Activated CD4-positive, alpha-beta memory T cell treated with anti-CD3 and anti-CD28 coated beads for 36 hours (primary cell): ENCODE measurements at regions of chr1 and their contacts with region 1.

Region 1: DNA sequence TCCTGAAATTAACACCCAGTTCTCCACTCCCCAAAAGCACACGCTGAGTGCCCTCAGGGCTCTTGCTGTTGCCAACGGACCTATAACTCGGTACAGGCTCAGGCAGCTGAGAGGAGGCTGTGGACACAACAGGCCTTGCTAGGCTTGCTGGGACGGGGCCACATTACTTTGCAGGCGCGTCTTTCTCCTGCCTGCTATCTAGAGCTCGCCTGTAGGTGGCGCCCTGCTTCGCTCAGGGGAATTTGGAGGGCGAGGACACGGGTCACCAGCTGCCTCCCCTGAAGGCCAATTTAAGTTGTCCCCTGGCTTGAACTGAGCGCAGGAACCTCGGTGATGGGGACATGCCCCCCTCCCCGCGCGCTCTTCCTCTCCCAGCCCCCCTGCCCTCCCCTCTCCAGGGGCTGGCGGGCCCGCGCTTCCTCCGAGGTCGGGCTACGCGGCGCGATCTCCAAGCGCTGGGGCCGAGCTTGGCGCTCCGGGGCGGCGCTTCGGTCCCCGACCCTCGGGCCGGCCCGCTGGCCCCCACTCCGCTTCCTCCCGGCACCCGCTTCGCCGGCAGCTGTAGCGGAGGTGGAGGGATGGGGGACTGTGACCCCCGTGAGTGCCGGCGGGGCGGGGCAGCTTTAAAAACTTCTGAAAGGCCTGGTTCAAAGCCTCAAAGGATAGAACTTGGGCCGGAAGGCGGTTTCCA is 32.4 kb upstream of the NFIA start:
- DNase-seq: peak; percentile 94
- H3K4me3 Mint-ChIP-seq: peak overlapping the region; percentile 71
- H3K27ac Mint-ChIP-seq: no peak overlapping the region
- H3K4me1 Mint-ChIP-seq: peaks cover 24% of the 10 kb centered on the region
- H3K27me3 Mint-ChIP-seq: peaks cover 37% of the 10 kb centered on the region

Region 2: DNA sequence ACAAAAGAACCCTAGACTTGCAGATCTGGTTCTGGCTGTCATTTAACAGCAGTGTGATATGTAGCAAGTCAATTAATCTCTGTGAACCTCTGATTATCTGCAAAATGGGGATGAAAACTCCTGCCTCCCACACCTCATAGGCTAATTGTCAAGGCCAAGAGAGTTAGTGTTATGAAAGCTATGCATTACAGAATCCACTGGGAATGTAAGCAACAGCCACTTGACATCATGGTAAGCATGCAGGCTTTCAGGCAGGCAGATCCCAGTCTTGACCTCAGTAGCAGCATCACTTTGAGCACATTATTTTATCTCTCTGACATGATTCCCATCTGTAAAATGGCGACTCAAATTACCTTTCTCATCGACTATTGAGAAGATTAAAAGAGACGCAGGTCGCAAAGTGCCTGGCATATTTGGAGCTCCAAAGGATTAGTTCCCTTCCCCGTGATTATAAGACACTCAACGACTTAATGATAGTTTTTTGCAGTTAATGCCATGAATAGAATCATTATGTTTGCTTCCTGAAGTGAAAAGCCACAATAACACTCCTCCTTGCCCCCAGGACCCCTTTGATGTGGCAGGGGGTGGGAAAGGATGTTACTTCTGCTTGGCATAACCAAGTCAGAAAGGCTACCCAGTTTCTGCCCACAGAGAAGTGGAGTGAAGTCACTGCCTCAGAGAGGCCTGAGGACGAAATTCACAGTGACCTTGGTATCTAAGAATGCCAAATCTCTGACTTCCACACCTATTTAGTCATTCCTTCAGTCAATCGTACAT is 240.6 kb before region 1 on chr1:
- CTCF ChIA-PET with region 1: no interaction called
- POLR2A ChIA-PET with region 1: no interaction called
- intact Hi-C with region 1: no loop called
- DNase-seq: no peak
- H3K4me3 Mint-ChIP-seq: no peak overlapping the region
- H3K27ac Mint-ChIP-seq: no peak overlapping the region
- H3K4me1 Mint-ChIP-seq: no peaks in the 10 kb centered on the region
- H3K27me3 Mint-ChIP-seq: no peaks in the 10 kb centered on the region

Region 3: DNA sequence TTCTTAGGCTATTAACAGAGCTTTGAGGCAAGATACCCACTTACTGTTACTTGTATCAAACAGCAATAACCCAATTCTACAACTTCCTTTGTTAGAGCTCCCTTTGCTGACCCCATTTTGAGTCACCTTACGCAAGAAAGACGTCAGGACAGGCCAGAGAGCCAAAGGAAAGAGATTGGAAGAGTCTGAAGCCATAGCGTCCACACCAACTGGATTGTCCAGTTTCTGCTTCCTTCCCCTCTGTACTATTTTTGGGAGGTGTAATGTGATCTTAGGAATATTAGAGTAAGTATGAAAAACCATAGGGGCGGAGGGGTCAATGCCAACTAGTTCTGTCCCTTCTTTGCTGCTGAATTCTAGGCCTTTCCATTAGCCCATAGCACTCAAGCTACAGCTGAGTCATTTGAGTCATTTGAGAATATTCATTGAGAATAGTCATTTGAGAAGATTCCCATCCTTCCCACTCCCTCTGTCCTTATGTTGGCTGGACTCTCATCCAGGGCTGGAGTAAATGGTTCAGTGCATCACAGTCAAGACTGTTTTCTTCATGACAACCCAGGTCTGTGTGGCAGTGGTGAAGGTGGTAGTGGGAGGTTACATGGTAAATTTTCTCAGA is 17.5 kb after region 1 on chr1:
- CTCF ChIA-PET with region 1: interaction called, 21 read pairs
- POLR2A ChIA-PET with region 1: no interaction called
- intact Hi-C with region 1: no loop called
- DNase-seq: no peak
- H3K4me3 Mint-ChIP-seq: no peak overlapping the region
- H3K27ac Mint-ChIP-seq: no peak overlapping the region
- H3K4me1 Mint-ChIP-seq: no peaks in the 10 kb centered on the region
- H3K27me3 Mint-ChIP-seq: no peaks in the 10 kb centered on the region

Region 4: GRCh38 chr1:61102041-61102440 is 52.0 kb after region 1 on chr1:
- CTCF ChIA-PET with region 1: no interaction called
- POLR2A ChIA-PET with region 1: no interaction called
- intact Hi-C with region 1: no loop called
- DNase-seq: no peak
- H3K4me3 Mint-ChIP-seq: no peak overlapping the region
- H3K27ac Mint-ChIP-seq: no peak overlapping the region
- H3K4me1 Mint-ChIP-seq: peaks cover 9% of the 10 kb centered on the region
- H3K27me3 Mint-ChIP-seq: no peaks in the 10 kb centered on the region

Region 5: GRCh38 chr1:61157468-61157987 is 107.5 kb after region 1 on chr1:
- CTCF ChIA-PET with region 1: interaction called, 18 read pairs
- POLR2A ChIA-PET with region 1: no interaction called
- intact Hi-C with region 1: loop called (anchors 5 kb)
- DNase-seq: no peak
- H3K4me3 Mint-ChIP-seq: no peak overlapping the region
- H3K27ac Mint-ChIP-seq: no peak overlapping the region
- H3K4me1 Mint-ChIP-seq: peaks cover 24% of the 10 kb centered on the region
- H3K27me3 Mint-ChIP-seq: no peaks in the 10 kb centered on the region

Region 6: GRCh38 chr1:61270761-61271411 is 220.9 kb after region 1 on chr1:
- CTCF ChIA-PET with region 1: interaction called, 12 read pairs
- POLR2A ChIA-PET with region 1: interaction called, 3 read pairs
- intact Hi-C with region 1: loop called (anchors 10 kb)
- DNase-seq: peak; percentile 58
- H3K4me3 Mint-ChIP-seq: peak overlapping the region; percentile 26
- H3K27ac Mint-ChIP-seq: peak overlapping the region; percentile 86
- H3K4me1 Mint-ChIP-seq: peaks cover 53% of the 10 kb centered on the region
- H3K27me3 Mint-ChIP-seq: peaks cover 5% of the 10 kb centered on the region

Region 7: GRCh38 chr1:61332196-61332753 is 282.3 kb after region 1 on chr1:
- CTCF ChIA-PET with region 1: interaction called, 5 read pairs
- POLR2A ChIA-PET with region 1: interaction called, 4 read pairs
- intact Hi-C with region 1: loop called (anchors 1 kb)
- DNase-seq: peak; percentile 30
- H3K4me3 Mint-ChIP-seq: no peak overlapping the region
- H3K27ac Mint-ChIP-seq: peak overlapping the region; percentile 67
- H3K4me1 Mint-ChIP-seq: peaks cover 24% of the 10 kb centered on the region
- H3K27me3 Mint-ChIP-seq: peaks cover 2% of the 10 kb centered on the region

Region 8: GRCh38 chr1:61851849-61852669 is 802.1 kb after region 1 on chr1:
- CTCF ChIA-PET with region 1: interaction called, 4 read pairs
- POLR2A ChIA-PET with region 1: no interaction called
- intact Hi-C with region 1: loop called (anchors 5 kb)
- DNase-seq: no peak
- H3K4me3 Mint-ChIP-seq: no peak overlapping the region
- H3K27ac Mint-ChIP-seq: no peak overlapping the region
- H3K4me1 Mint-ChIP-seq: no peaks in the 10 kb centered on the region
- H3K27me3 Mint-ChIP-seq: no peaks in the 10 kb centered on the region

Region 9: DNA sequence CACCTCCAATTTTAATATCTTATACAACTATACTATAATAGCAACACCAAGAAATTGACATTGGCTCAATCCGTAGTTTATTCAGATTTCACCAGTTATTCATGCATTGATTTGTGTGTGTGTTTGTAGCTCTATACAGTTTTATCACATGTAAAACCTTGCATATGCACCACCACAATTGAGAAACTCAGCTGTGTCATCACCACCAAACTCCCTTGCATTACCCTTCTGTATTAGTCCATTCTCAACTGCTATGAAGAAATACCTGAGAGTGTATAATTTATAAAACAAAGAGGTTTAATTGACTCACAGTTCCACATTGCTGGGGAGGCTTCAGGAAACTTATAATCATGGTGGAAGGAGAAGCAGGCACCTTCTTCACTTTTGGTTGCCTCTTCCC is 854.4 kb after region 1 on chr1:
- CTCF ChIA-PET with region 1: no interaction called
- POLR2A ChIA-PET with region 1: no interaction called
- intact Hi-C with region 1: no loop called
- DNase-seq: no peak
- H3K4me3 Mint-ChIP-seq: no peak overlapping the region
- H3K27ac Mint-ChIP-seq: no peak overlapping the region
- H3K4me1 Mint-ChIP-seq: no peaks in the 10 kb centered on the region
- H3K27me3 Mint-ChIP-seq: no peaks in the 10 kb centered on the region